Activated T-helper 2 cell treated with anti-CD3 and anti-CD28 coated beads, Interferon-gamma antibody, Interleukin-2, Interleukin-4, amounts not matched to agents 10 μg/mL and 5 μg/mL and 100 μg/mL, durations not matched to agents 14 hours and 24 hours and 36 hours (primary cell): ENCODE measurements at regions of chr7 and their contacts with region 1.

Region 1: DNA sequence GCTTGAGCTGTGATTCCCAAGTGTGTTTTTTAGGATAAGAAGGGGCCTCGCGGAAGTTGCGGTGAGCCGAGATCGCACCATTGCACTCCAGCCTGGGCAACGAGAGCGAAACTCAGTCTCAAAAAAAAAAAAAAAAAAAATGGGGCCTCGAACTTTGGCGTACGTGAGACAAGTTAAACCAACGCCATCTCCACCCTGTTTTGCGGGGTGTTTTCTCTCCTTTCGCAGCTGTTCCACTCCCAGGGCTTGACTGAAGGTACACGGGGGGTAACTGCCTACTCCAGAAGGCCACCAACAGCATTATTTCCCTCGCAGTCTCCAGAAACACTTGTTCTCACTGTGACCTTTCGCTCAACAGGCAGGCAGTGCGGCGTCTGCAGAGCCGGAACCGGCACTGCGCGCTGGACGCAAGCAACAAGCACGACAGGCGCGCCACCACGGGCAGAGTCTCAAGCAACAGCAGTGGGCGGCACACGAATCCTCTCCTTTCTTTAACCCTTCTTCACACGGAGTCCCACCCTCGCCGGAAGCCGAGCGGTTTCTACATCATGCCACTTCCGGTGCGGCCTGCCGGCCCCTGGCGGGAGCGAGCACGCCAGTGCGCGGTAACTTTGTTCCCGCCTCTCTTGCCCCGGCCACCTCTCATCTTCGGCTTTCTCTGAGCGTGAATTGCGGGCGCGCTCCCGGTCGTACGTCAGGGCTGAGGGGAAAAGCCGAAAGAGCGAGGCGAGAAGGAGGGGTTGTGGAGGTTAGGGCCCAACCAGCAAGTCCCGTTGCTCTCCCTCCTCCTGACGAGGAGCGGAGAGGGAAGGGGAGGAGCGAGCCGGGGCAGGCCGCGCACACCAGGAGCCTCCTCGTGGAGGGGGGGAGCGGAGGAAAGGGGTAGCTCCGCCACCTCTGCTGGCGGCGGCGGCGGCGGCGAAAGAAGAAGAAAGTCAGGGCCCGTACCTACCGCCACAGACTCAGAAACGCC is 814 bp upstream of the CDK13 start:
- DNase-seq: peak; percentile 99
- H3K4me3 Mint-ChIP-seq: peak overlapping the region; percentile 88
- H3K27ac Mint-ChIP-seq: peak overlapping the region; percentile 99
- H3K4me1 Mint-ChIP-seq: peaks cover 25% of the 10 kb centered on the region
- H3K27me3 Mint-ChIP-seq: no peaks in the 10 kb centered on the region

Region 2: GRCh38 chr7:39566023-39566921 is 383.0 kb before region 1 on chr7 and contains the start of gene YAE1:
- intact Hi-C with region 1: loop called (anchors 5 kb)
- DNase-seq: peak; percentile 72
- H3K4me3 Mint-ChIP-seq: peak within 1 kb of the TSS; percentile 99
- H3K27ac Mint-ChIP-seq: peak within 1 kb of the TSS; percentile 96
- H3K4me1 Mint-ChIP-seq: peaks cover 18% of the 10 kb centered on the region
- H3K27me3 Mint-ChIP-seq: peaks cover 12% of the 10 kb centered on the region
- total RNA-seq, gene YAE1: 11.9 TPM in 2 replicates

Region 3: DNA sequence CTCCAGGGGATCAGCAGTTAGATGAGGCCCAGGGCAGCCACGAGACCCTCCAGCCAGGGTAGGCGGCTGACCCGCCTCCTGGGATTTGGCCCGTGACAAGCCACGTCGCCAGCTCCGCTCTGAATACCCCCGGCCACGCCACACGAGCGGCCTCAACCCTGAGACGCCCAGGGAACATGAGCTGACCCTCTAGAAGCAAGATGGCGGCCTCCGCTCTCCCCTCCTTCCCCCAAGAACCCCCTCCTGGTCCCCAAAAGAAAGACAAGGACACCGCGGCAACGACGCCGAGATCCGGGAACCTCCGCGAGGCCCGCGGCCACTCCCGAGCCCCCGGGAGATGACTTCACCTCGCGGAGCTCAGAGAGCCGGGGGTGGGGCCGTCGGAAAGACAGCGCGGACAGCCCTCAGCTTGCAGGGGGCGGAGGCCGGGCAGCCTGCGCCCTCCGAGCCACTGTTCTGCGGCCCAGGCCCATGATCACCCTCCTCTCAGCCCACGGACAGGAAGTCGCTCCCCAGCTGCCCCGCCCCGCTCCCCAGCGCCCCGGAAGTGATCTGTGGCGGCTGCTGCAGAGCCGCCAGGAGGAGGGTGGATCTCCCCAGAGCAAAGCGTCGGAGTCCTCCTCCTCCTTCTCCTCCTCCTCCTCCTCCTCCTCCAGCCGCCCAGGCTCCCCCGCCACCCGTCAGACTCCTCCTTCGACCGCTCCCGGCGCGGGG is 326.1 kb before region 1 on chr7 and contains the start of gene RALA:
- intact Hi-C with region 1: loop called (anchors 2 kb)
- DNase-seq: peak; percentile 85
- H3K4me3 Mint-ChIP-seq: peak within 1 kb of the TSS; percentile 99
- H3K27ac Mint-ChIP-seq: peak within 1 kb of the TSS; percentile 92
- H3K4me1 Mint-ChIP-seq: peaks cover 36% of the 10 kb centered on the region
- H3K27me3 Mint-ChIP-seq: peaks cover 8% of the 10 kb centered on the region
- total RNA-seq, gene RALA: 33.1 and 35.3 TPM in 2 replicates

Region 4: DNA sequence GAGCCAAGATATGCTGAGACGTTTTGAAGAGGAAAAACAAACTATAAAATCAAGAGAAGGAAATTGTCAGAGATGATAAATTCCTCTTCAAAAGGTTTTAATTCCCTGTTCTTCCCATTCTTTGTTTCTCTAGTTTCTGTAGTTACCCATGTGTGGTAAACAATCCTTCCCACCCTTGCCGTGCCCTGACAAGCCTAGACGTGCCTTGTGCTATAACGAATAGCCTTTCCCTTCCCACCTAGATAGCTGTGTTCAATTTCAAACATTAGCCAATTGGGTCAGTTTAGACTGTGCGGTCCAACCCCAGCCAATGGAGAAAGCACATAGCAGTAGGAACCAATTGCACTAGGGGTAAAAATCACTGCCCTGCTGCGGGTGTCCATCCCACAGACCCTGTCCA is 187.8 kb before region 1 on chr7:
- intact Hi-C with region 1: no loop called
- DNase-seq: no peak
- H3K4me3 Mint-ChIP-seq: no peak overlapping the region
- H3K27ac Mint-ChIP-seq: no peak overlapping the region
- H3K4me1 Mint-ChIP-seq: peaks cover 4% of the 10 kb centered on the region
- H3K27me3 Mint-ChIP-seq: no peaks in the 10 kb centered on the region

Region 5: DNA sequence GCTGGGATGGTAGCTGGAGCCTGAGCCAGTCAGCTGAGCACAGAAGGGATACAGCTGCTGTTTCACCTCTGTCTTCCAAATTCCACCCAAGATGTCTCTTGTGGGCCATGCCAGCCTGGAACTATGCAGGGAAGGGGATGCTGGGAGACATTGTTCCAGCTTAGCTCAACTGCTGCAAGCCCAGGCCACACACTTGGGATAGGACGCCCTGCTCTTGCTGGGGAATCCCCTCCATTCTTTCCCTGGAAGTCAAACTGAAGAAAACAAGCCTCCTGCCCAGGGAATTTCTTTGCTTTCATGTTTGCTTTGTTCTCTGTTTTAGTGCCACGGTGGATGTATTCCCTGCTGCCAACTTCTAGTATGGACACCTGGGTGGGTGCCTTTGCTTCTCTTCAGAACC is 54.3 kb before region 1 on chr7:
- intact Hi-C with region 1: loop called (anchors 2 kb)
- DNase-seq: no peak
- H3K4me3 Mint-ChIP-seq: no peak overlapping the region
- H3K27ac Mint-ChIP-seq: no peak overlapping the region
- H3K4me1 Mint-ChIP-seq: no peaks in the 10 kb centered on the region
- H3K27me3 Mint-ChIP-seq: peaks cover 18% of the 10 kb centered on the region

Region 6: GRCh38 chr7:39921506-39922175 is 27.6 kb before region 1 on chr7:
- intact Hi-C with region 1: no loop called
- DNase-seq: no peak
- H3K4me3 Mint-ChIP-seq: no peak overlapping the region
- H3K27ac Mint-ChIP-seq: no peak overlapping the region
- H3K4me1 Mint-ChIP-seq: no peaks in the 10 kb centered on the region
- H3K27me3 Mint-ChIP-seq: peaks cover 21% of the 10 kb centered on the region

Region 7: DNA sequence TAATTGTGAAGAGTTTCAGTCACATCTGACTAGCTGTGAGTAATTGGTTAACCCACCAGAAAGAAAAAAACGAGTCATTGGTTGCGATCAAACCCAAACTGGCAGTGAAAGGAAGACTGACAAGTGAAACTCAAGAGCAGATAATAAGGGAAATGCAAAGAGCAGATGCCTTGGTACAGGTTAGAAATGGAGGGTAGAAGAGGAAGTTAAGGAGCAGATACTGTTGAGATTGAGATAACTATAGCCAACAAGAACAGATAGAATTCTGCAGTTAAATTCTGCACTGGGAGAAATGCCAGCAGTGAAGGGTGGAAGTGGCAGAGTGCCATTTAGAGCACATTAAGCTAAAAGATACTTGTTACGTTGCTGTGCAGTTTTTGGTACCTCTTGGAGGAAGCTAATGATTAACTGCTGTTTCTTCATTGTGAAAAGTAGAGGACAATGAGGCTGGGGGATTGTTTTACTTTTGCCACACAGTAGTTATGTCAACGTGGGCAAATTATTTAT is 66.6 kb after region 1 on chr7:
- intact Hi-C with region 1: loop called (anchors 10 kb)
- DNase-seq: no peak
- H3K4me3 Mint-ChIP-seq: no peak overlapping the region
- H3K27ac Mint-ChIP-seq: peak overlapping the region; percentile 1
- H3K4me1 Mint-ChIP-seq: peaks cover 17% of the 10 kb centered on the region
- H3K27me3 Mint-ChIP-seq: no peaks in the 10 kb centered on the region

Region 8: GRCh38 chr7:40134428-40135316 is 185.4 kb after region 1 on chr7 and contains the starts of genes MPLKIP and SUGCT:
- intact Hi-C with region 1: loop called (anchors 1 kb)
- DNase-seq: peak; percentile 83
- H3K4me3 Mint-ChIP-seq: peak within 1 kb of the TSS; percentile 93
- H3K27ac Mint-ChIP-seq: peak within 1 kb of the TSS; percentile 93
- H3K4me1 Mint-ChIP-seq: peaks cover 17% of the 10 kb centered on the region
- H3K27me3 Mint-ChIP-seq: peaks cover 15% of the 10 kb centered on the region
- total RNA-seq, gene MPLKIP: 35.6 and 39.0 TPM in 2 replicates
- total RNA-seq, gene SUGCT: 0.43 and 1.2 TPM in 2 replicates